Caco-2 (cell line): ENCODE measurements at regions of chr13 and their contacts with region 1.

Region 1: GRCh38 chr13:108227651-108228272 is 9.6 kb downstream of the ABHD13 start:
- DNase-seq: peak in 1 of 2 experiments; percentile 60
- H3K4me3 ChIP-seq: no peak overlapping the region
- H3K4me3 Mint-ChIP-seq: no peak overlapping the region
- H3K27ac Mint-ChIP-seq: no peak overlapping the region
- H3K4me1 ChIP-seq: peaks cover 28% of the 10 kb centered on the region
- H3K4me1 Mint-ChIP-seq: peaks cover 28% of the 10 kb centered on the region
- H3K27me3 ChIP-seq: no peaks in the 10 kb centered on the region
- H3K27me3 Mint-ChIP-seq: no peaks in the 10 kb centered on the region
- CTCF ChIP-seq: peak; percentile 64 to 68

Region 2: DNA sequence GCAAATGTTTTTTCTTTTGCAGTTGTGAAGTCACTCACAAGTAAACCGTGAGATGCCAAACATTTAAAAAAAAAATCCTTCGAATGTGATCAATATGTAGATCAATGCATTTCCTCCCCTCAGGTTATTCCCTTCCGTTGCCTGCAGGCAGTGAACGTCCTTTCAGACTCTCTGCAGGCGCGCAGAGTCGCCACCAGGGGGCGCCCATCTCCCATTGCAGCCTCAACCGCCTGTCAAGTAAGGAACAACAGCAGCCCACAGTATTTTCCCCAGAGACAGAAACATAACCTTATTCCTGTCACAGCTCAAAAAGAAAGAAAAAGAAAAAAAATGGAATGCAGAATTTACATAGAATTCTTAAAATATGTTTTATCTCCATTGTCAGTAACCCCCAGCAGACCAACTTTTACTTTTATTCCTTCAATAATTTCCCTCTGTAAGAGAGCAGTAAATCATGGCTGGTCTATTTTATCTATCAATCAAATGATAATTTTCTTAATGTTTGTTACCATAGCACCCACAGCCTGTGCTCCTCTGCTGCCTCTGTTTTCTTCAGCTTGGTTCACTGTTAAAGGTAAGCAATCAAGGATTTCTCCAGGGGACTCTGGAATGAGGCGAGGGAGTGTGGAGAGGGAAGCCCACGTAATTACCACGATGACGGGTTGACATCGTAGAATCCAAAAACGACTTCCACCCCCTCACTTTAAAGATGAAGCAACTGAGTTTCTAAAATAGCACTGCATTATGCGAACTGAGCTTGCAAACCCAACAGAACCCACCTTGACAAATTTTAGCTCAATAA is 1022.3 kb before region 1 on chr13:
- CTCF ChIA-PET with region 1: no interaction called
- POLR2A ChIA-PET with region 1: no interaction called
- intact Hi-C with region 1: loop called (anchors 10 kb)
- DNase-seq: peak; percentile 73 to 82
- H3K4me3 ChIP-seq: no peak overlapping the region
- H3K4me3 Mint-ChIP-seq: no peak overlapping the region
- H3K27ac Mint-ChIP-seq: no peak overlapping the region
- H3K4me1 ChIP-seq: no peaks in the 10 kb centered on the region
- H3K4me1 Mint-ChIP-seq: peaks cover 3% of the 10 kb centered on the region
- H3K27me3 ChIP-seq: 0 out of 2 replicates have a peak, but pooled peaks cover 2% of the 10 kb centered on the region
- H3K27me3 Mint-ChIP-seq: peaks cover 6% of the 10 kb centered on the region
- CTCF ChIP-seq: peak; percentile 98 to 99

Region 3: GRCh38 chr13:108322206-108322824 is 94.6 kb after region 1 on chr13:
- CTCF ChIA-PET with region 1: no interaction called
- POLR2A ChIA-PET with region 1: no interaction called
- intact Hi-C with region 1: loop called (anchors 5 kb)
- DNase-seq: peak in 1 of 2 experiments; percentile 40
- H3K4me3 ChIP-seq: no peak overlapping the region
- H3K4me3 Mint-ChIP-seq: no peak overlapping the region
- H3K27ac Mint-ChIP-seq: no peak overlapping the region
- H3K4me1 ChIP-seq: no peaks in the 10 kb centered on the region
- H3K4me1 Mint-ChIP-seq: no peaks in the 10 kb centered on the region
- H3K27me3 ChIP-seq: no peaks in the 10 kb centered on the region
- H3K27me3 Mint-ChIP-seq: peaks cover 7% of the 10 kb centered on the region
- CTCF ChIP-seq: peak; percentile 75 to 84

Region 4: GRCh38 chr13:108508263-108508662 is 280.5 kb after region 1 on chr13:
- CTCF ChIA-PET with region 1: no interaction called
- POLR2A ChIA-PET with region 1: no interaction called
- intact Hi-C with region 1: loop called (anchors 5 kb)
- DNase-seq: peak in 1 of 2 experiments; percentile 16
- H3K4me3 ChIP-seq: no peak overlapping the region
- H3K4me3 Mint-ChIP-seq: no peak overlapping the region
- H3K27ac Mint-ChIP-seq: no peak overlapping the region
- H3K4me1 ChIP-seq: no peaks in the 10 kb centered on the region
- H3K4me1 Mint-ChIP-seq: no peaks in the 10 kb centered on the region
- H3K27me3 ChIP-seq: no peaks in the 10 kb centered on the region
- H3K27me3 Mint-ChIP-seq: no peaks in the 10 kb centered on the region
- CTCF ChIP-seq: peak; percentile 27 to 50